ENCODE measurements at regions of chr17 and their contacts with region 1.

Region 1: DNA sequence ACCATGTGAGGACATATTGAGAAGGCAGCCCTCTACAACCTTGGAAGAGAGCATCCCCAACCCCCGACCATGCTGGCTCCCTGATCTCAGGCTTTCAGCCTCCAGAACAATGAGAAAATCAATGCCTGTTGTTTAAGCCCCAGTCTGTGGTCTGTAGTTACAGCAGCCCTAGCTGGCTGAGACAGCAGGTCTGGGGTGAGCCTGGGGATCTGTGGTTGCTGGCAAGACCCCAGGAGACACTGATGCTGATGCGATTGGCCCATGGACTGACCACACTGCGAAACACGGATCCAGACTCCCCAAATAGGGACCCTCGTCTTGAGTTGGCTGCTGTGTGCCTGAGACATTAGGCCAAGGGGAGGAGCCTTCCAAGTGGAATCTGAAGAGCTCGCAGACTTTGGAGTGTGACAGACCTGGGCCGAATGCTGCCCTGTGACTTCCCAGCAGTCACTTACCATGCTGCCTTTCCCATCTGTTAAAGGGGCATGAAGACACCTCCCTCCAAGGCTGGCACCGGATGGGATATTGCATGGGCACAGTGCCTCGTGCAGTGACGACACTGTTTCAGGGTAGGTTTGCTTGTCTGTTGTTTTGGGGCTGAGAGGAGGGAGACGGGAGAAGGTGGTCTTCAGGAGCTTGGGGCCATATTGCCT is 147.8 kb upstream of the RPL38 start:
- DNase-seq: no peak
- ATAC-seq: no peak
- H3K4me3 ChIP-seq: no peak overlapping the region
- H3K27ac ChIP-seq: no peak overlapping the region
- H3K4me1 ChIP-seq: no peaks in the 10 kb centered on the region
- H3K27me3 ChIP-seq: peaks cover 0 to 59% (median 19%) of the 10 kb centered on the region in 9 donors
- CTCF ChIP-seq: no peak
- POLR2A ChIP-seq: no peak

Region 2: GRCh38 chr17:73879987-73880386 is 175.6 kb before region 1 on chr17:
- intact Hi-C with region 1: no loop called
- DNase-seq: no peak
- ATAC-seq: no peak
- H3K4me3 ChIP-seq: no peak overlapping the region
- H3K27ac ChIP-seq: no peak overlapping the region
- H3K4me1 ChIP-seq: peaks cover 0 to 5% (median 0%) of the 10 kb centered on the region in 12 donors
- H3K27me3 ChIP-seq: peaks cover 0 to 27% (median 5%) of the 10 kb centered on the region in 9 donors
- CTCF ChIP-seq: no peak
- POLR2A ChIP-seq: no peak

Region 3: GRCh38 chr17:73910206-73910605 is 145.4 kb before region 1 on chr17:
- intact Hi-C with region 1: no loop called
- DNase-seq: no peak
- ATAC-seq: no peak
- H3K4me3 ChIP-seq: no peak overlapping the region
- H3K27ac ChIP-seq: no peak overlapping the region
- H3K4me1 ChIP-seq: no peaks in the 10 kb centered on the region
- H3K27me3 ChIP-seq: peaks cover 0 to 87% (median 16%) of the 10 kb centered on the region in 9 donors
- CTCF ChIP-seq: no peak
- POLR2A ChIP-seq: no peak

Region 4: DNA sequence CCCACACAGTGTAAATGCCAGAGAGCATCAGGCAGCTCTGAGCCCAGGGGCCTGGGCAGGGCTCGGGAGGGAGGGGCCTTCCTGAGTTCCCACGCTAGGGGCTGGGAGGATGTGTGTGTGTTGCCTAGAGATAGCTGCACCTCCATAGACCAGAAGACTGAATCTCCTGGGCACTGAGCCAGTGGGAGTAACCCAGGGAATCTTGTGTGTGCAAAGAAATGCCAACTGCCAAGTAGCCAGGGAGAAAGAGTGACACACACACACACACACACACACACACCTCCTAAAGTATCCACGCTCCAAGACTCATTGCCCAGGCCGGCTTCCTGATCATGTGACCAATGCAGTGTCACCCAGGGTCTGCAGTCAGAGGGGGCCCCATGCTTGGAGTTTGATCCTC is 18.3 kb before region 1 on chr17:
- intact Hi-C with region 1: loop called in 1 of 10 experiments (anchors 2 kb)
- DNase-seq: no peak
- ATAC-seq: no peak
- H3K4me3 ChIP-seq: no peak overlapping the region
- H3K27ac ChIP-seq: no peak overlapping the region
- H3K4me1 ChIP-seq: no peaks in the 10 kb centered on the region
- H3K27me3 ChIP-seq: peaks cover 0 to 14% (median 0%) of the 10 kb centered on the region in 9 donors
- CTCF ChIP-seq: no peak
- POLR2A ChIP-seq: no peak

Region 5: DNA sequence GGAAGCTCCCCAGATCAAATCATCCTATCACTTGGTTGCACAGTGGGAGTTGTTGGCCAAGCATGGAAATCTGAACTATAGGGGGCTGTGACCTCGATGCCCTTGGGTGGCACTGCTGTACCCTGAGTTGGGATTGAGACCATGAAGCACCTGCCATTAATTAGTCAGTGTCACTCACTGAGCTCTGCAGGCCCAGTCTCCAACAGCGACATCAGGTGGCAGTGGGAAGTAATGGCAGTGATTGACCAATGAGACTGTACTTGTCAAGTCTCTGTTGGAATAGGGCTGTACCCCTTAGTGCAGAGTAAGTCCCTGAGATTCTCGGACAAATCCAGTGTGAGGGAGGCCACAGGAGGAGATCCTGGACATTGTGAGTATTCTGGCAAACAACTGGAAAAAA is 29.8 kb after region 1 on chr17:
- intact Hi-C with region 1: no loop called
- DNase-seq: no peak
- ATAC-seq: no peak
- H3K4me3 ChIP-seq: no peak overlapping the region
- H3K27ac ChIP-seq: no peak overlapping the region
- H3K4me1 ChIP-seq: no peaks in the 10 kb centered on the region
- H3K27me3 ChIP-seq: peaks cover 3 to 54% (median 14%) of the 10 kb centered on the region in 9 donors
- CTCF ChIP-seq: no peak
- POLR2A ChIP-seq: no peak

Region 6: DNA sequence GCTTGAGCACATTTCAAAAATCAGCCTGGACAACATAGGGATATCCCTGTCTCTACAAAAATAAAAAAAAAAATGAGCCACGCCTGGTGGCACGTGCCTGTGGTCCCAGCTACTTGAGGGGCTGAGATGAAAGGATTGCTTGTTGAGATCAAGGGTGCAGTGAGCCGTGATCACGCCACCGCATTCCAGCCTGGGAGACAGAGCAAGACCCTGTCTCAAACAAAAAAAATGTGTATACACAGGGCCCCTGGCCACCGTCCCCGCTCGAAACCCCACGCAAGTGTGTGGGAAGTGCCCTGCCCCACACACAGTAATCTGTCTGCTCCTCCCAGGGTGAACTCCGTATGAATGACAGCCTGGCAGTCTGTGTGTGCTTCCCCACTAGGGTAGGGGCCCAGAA is 54.8 kb after region 1 on chr17:
- intact Hi-C with region 1: no loop called
- DNase-seq: no peak
- ATAC-seq: no peak
- H3K4me3 ChIP-seq: no peak overlapping the region
- H3K27ac ChIP-seq: no peak overlapping the region
- H3K4me1 ChIP-seq: no peaks in the 10 kb centered on the region
- H3K27me3 ChIP-seq: peaks cover 0 to 68% (median 8%) of the 10 kb centered on the region in 9 donors
- CTCF ChIP-seq: no peak
- POLR2A ChIP-seq: no peak

Measured in heart left ventricle (tissue), 16 donors.